Activated CD8-positive, alpha-beta T cell treated with anti-CD3 and anti-CD28 coated beads for 36 hours (primary cell): ENCODE measurements at regions of chr2 and their contacts with region 1.

Region 1: GRCh38 chr2:218908721-218909619 is 28.3 kb downstream of the WNT10A start:
- DNase-seq: peak; percentile 97
- ATAC-seq: peak; percentile 97
- H3K4me3 Mint-ChIP-seq: peak overlapping the region; percentile 87
- H3K27ac Mint-ChIP-seq: peak overlapping the region; percentile 88
- H3K4me1 Mint-ChIP-seq: peaks cover 9% of the 10 kb centered on the region
- H3K27me3 Mint-ChIP-seq: peaks cover 17% of the 10 kb centered on the region
- CTCF ChIP-seq: no peak

Region 2: GRCh38 chr2:218694405-218695145 is 214.4 kb before region 1 on chr2:
- CTCF ChIA-PET with region 1: no interaction called
- POLR2A ChIA-PET with region 1: no interaction called
- intact Hi-C with region 1: no loop called
- DNase-seq: no peak
- ATAC-seq: no peak
- H3K4me3 Mint-ChIP-seq: no peak overlapping the region
- H3K27ac Mint-ChIP-seq: no peak overlapping the region
- H3K4me1 Mint-ChIP-seq: no peaks in the 10 kb centered on the region
- H3K27me3 Mint-ChIP-seq: no peaks in the 10 kb centered on the region
- CTCF ChIP-seq: no peak

Region 3: DNA sequence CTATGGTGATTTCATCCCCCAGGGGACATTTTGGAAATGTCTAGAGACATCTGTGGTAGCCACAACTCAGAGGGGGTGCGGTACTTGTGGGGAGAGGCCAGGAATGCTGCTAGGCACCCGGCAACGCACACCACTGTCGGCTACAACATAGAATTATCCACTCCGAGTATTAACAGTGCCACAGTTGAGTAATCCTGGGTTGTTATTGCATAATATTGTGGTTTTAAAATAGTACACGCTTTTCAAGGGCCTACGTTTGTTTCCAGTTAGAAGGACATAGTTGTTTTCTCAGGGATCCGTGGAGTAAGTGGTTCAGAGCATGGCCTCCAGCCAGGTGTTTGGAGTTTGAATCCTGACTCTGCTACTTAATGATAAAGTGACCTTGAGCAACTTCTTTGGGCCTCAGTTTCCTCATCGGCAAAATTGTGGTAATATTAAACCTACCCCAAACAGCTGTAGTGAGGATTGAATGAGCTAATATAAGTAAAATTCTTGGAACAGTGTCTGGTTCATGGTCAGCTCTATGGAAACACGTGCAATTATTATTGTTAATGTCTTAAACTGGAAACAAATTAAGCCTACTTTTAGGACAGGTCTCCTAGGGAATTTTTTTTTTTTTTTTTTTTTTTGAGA is 102.5 kb before region 1 on chr2:
- CTCF ChIA-PET with region 1: no interaction called
- POLR2A ChIA-PET with region 1: no interaction called
- intact Hi-C with region 1: no loop called
- DNase-seq: no peak
- ATAC-seq: no peak
- H3K4me3 Mint-ChIP-seq: no peak overlapping the region
- H3K27ac Mint-ChIP-seq: no peak overlapping the region
- H3K4me1 Mint-ChIP-seq: peaks cover 5% of the 10 kb centered on the region
- H3K27me3 Mint-ChIP-seq: peaks cover 30% of the 10 kb centered on the region
- CTCF ChIP-seq: no peak

Region 4: GRCh38 chr2:218867900-218868299 is 41.1 kb before region 1 on chr2:
- CTCF ChIA-PET with region 1: interaction called, 5 read pairs
- POLR2A ChIA-PET with region 1: no interaction called
- intact Hi-C with region 1: loop called (anchors 5 kb)
- DNase-seq: no peak
- ATAC-seq: no peak
- H3K4me3 Mint-ChIP-seq: no peak overlapping the region
- H3K27ac Mint-ChIP-seq: no peak overlapping the region
- H3K4me1 Mint-ChIP-seq: peaks cover 19% of the 10 kb centered on the region
- H3K27me3 Mint-ChIP-seq: peaks cover 42% of the 10 kb centered on the region
- CTCF ChIP-seq: no peak

Region 5: DNA sequence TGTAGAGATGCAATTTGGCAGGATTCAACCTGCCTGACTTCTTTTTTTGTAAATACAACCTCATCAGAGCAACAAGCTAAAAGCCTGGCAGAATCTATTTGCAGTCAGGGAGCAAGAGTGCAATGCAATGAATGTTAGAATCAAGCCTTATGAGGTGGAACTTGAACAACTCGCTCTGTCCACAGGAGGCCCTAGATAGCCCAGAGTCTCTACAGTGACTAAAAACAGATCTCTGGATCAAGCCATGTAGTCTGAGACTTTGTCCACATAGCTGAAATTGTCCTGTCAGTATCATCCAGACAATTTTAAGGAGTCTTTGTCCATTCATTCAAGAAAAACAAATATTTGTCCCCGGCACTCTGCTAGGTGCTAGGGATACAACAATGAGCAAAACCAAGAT is 18.5 kb after region 1 on chr2:
- CTCF ChIA-PET with region 1: no interaction called
- POLR2A ChIA-PET with region 1: no interaction called
- intact Hi-C with region 1: no loop called
- DNase-seq: no peak
- ATAC-seq: no peak
- H3K4me3 Mint-ChIP-seq: no peak overlapping the region
- H3K27ac Mint-ChIP-seq: no peak overlapping the region
- H3K4me1 Mint-ChIP-seq: no peaks in the 10 kb centered on the region
- H3K27me3 Mint-ChIP-seq: peaks cover 24% of the 10 kb centered on the region
- CTCF ChIP-seq: no peak